ENCODE measurements at regions of chr11 and their contacts with region 1.

Region 1: DNA sequence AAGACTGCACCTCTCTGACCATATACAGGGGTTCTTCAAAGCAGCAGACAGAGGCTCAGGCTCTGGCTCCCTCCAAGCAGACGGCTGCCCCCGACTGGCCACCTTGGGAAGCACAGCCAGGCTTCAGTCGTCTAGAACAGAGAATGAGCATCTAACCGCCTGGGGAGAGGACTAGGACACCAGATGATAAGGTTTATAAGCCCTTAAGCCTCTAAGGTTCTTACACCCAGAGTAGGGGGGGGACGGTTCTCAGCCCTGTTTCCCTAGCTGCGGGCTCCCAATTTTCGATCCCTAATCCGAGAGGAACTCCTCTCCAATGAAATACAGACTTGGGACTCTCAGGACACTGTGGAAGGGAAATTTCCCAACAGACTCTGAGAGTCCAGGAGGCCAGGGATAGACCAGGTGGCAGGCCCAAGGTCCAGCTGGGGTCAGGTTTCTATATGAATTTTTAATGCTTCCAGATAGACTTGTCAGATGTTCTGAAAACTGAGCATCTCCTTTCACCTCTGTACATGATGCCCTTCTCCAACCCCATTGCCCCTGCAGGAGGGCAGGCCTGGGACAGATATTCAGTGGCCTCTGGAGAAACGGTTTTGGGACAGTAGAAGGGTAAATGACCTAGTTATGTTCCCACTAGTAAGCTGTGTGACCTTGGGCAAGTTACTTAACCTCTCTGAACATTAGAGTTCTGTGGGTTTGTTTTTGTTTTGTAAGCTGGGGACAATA is 20.2 kb downstream of the RTN4RL2 start:
- DNase-seq: peak in 1 of 2 donors; percentile 76
- H3K4me3 ChIP-seq: no peak overlapping the region
- H3K27ac ChIP-seq: no peak overlapping the region
- H3K4me1 ChIP-seq: peaks cover 4 to 16% of the 10 kb centered on the region in 2 donors
- H3K27me3 ChIP-seq: peaks cover 6% of the 10 kb centered on the region
- CTCF ChIP-seq: peak; percentile 48 to 78 (median 75)

Region 2: DNA sequence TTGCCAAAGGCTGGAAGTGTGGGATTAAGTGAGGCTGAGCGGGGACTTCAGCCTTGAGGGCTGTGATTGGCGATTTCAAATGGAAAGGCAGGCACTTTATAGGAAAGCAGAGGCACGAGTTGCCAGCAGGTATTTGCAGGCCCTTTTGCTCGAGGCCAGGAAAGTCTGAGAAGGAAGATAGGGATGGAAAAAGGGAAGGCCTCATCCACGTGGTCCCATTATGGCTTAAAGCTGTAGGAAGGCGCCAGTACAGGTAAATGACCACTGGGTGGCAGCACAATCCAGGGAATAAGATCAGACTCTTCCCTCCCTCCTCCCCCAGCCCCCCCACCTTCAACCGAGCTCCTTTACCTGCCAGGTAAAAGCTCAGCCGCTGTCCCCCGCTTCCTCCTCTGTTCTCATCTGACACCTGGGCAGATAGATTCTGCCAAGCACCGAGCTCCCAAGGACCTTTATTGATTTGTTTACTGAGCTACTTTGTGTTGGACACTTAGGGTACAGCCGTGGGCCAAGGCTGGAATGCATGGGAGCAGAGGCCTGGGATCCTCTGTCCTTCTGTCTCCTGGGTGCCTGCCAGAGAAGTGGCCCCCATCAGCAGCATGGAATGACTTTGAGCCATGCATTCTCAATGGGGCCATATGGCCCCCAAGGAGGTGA is 134.9 kb before region 1 on chr11:
- intact Hi-C with region 1: loop called (anchors 5 kb)
- DNase-seq: peak in 1 of 2 donors; percentile 82
- H3K4me3 ChIP-seq: no peak overlapping the region
- H3K27ac ChIP-seq: no peak overlapping the region
- H3K4me1 ChIP-seq: no peaks in the 10 kb centered on the region
- H3K27me3 ChIP-seq: no peaks in the 10 kb centered on the region
- CTCF ChIP-seq: peak; percentile 49 to 79 (median 64)

Region 3: DNA sequence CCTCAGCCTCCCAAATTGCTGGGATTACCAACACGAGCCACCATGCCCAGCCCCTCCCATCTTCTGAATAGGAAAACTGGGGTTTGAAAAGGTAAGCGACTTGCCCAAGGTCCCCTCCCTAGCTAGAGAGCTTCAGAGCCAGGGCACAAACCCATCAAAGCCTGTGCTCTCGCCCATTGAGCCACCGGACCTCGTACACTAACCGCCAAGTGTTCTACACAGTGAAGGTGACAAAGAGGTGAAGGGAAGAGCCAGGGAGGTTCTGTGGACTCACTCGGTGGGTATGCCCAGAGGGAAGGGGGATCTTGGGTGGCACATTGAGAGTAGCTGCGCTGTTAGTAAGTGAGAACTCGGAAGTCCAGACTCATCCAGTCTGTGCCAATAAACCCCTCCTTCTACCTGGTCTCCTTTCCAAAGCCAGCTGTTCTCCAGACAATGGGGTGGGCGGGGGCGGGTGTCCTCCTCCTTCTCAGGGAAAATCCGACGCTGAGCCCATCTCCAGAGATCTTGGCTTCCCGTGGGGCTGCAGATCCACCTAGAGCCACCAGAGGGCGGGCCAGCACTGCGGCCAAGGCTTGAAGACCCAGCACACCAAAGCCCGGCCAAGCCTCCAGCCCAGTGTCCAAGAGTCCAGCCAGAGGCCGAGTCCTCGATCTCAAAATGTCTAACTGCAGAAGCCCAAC is 23.5 kb before region 1 on chr11:
- intact Hi-C with region 1: loop called (anchors 2 kb)
- DNase-seq: peak; percentile 50 to 95
- H3K4me3 ChIP-seq: peak overlapping the region; percentile 53 to 55
- H3K27ac ChIP-seq: no peak overlapping the region
- H3K4me1 ChIP-seq: peaks cover 16 to 32% of the 10 kb centered on the region in 2 donors
- H3K27me3 ChIP-seq: peaks cover 28% of the 10 kb centered on the region
- CTCF ChIP-seq: peak; percentile 91 to 100 (median 100)